ENCODE measurements at regions of chr17 and their contacts with region 1.

Region 1: GRCh38 chr17:10875979-10876555 is 38.2 kb upstream of the PIRT start:
- DNase-seq: peak; percentile 53 to 57
- ATAC-seq: peak; percentile 86 to 96; a peak in 5 of 6 replicates
- H3K4me3 ChIP-seq: no peak overlapping the region
- H3K27ac ChIP-seq: no peak overlapping the region
- H3K4me1 ChIP-seq: no peaks in the 10 kb centered on the region
- CTCF ChIP-seq: peak; percentile 86
- EP300 ChIP-seq: no peak
- POLR2A ChIP-seq: no peak
- RAD21 ChIP-seq: peak; percentile 85 to 88

Region 2: GRCh38 chr17:10798332-10798749 is 77.7 kb before region 1 on chr17:
- CTCF ChIA-PET with region 1: no interaction called
- POLR2A ChIA-PET with region 1: no interaction called
- DNase-seq: no peak
- ATAC-seq: peak in 1 of 2 experiments; percentile 19; a peak in 1 of 6 replicates
- H3K4me3 ChIP-seq: no peak overlapping the region
- H3K27ac ChIP-seq: no peak overlapping the region
- H3K4me1 ChIP-seq: no peaks in the 10 kb centered on the region
- CTCF ChIP-seq: no peak
- EP300 ChIP-seq: no peak
- POLR2A ChIP-seq: no peak
- RAD21 ChIP-seq: no peak

Region 3: GRCh38 chr17:10888858-10889257 is 12.8 kb after region 1 on chr17:
- CTCF ChIA-PET with region 1: interaction called, 11 read pairs
- POLR2A ChIA-PET with region 1: no interaction called
- DNase-seq: no peak
- ATAC-seq: no peak
- H3K4me3 ChIP-seq: no peak overlapping the region
- H3K27ac ChIP-seq: no peak overlapping the region
- H3K4me1 ChIP-seq: no peaks in the 10 kb centered on the region
- CTCF ChIP-seq: no peak
- EP300 ChIP-seq: no peak
- POLR2A ChIP-seq: no peak
- RAD21 ChIP-seq: no peak

Region 4: GRCh38 chr17:11296994-11297393 is 420.9 kb after region 1 on chr17:
- CTCF ChIA-PET with region 1: interaction called, 18 read pairs
- POLR2A ChIA-PET with region 1: no interaction called
- DNase-seq: peak; percentile 44
- ATAC-seq: peak in 1 of 2 experiments; percentile 82; a peak in 3 of 6 replicates
- H3K4me3 ChIP-seq: no peak overlapping the region
- H3K27ac ChIP-seq: no peak overlapping the region
- H3K4me1 ChIP-seq: no peaks in the 10 kb centered on the region
- CTCF ChIP-seq: peak; percentile 47
- EP300 ChIP-seq: no peak
- POLR2A ChIP-seq: no peak
- RAD21 ChIP-seq: peak in 1 of 2 experiments; percentile 54; a peak in 2 of 5 replicates

Region 5: GRCh38 chr17:11935734-11936406 is 1059.8 kb after region 1 on chr17:
- CTCF ChIA-PET with region 1: interaction called, 30 read pairs
- POLR2A ChIA-PET with region 1: no interaction called
- DNase-seq: peak in 1 of 2 experiments; percentile 72
- ATAC-seq: peak; percentile 49 to 65; a peak in 3 of 6 replicates
- H3K4me3 ChIP-seq: no peak overlapping the region
- H3K27ac ChIP-seq: no peak overlapping the region
- H3K4me1 ChIP-seq: no peaks in the 10 kb centered on the region
- CTCF ChIP-seq: peak; percentile 94
- EP300 ChIP-seq: no peak
- POLR2A ChIP-seq: no peak
- RAD21 ChIP-seq: peak; percentile 84 to 95